ENCODE measurements at regions of chr7 and their contacts with region 1.

Region 1: DNA sequence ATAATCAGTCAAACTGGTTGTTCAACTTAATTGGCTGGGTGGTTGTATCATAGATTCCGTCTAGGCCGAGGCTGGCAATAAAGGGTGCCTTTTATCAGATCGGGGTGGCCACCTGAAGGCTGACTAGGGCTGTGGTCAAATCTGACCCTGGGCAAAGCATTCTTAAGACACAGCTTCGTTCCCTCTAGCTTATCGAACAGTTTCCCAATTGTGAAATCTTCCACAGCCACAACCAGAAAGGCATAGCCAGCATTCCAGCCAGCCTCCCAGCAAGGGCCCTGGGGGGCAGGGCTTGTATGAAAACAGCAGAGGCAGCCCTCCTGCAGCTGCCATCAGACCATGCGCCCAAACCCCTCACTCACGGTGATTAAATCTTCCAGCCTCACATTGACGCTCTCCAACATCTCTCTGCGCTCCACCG is 42.5 kb upstream of the TMEM213 start:
- DNase-seq: peak; percentile 84
- H3K4me3 Mint-ChIP-seq: peak overlapping the region; percentile 39
- H3K27ac Mint-ChIP-seq: peak overlapping the region; percentile 82
- H3K4me1 Mint-ChIP-seq: peaks cover 58% of the 10 kb centered on the region
- H3K27me3 Mint-ChIP-seq: no peaks in the 10 kb centered on the region
- CTCF ChIP-seq: no peak

Region 2: DNA sequence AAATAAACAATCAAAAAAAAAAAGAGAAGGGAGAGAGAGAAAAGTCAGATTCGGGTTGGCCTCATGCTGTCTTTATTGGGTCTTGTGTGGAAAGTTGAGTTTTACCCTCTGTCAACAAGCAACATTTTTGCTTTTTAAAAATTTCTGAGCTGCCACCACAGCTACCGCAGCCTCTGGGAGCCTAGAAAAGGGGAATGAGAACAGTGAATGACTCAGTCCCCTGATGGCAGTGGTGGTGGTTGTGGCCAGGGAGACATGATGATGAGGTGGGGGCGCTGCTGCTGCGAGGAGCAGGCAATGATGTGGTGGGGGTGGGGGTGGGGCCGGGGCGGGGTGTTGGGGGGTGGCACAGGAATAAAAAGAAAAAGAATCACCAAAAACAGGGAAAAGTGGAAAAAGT is 733.4 kb before region 1 on chr7:
- CTCF ChIA-PET with region 1: interaction called, 11 read pairs
- intact Hi-C with region 1: no loop called
- DNase-seq: no peak
- H3K4me3 Mint-ChIP-seq: no peak overlapping the region
- H3K27ac Mint-ChIP-seq: no peak overlapping the region
- H3K4me1 Mint-ChIP-seq: peaks cover 8% of the 10 kb centered on the region
- H3K27me3 Mint-ChIP-seq: no peaks in the 10 kb centered on the region
- CTCF ChIP-seq: no peak

Region 3: GRCh38 chr7:138691178-138691577 is 64.2 kb before region 1 on chr7:
- CTCF ChIA-PET with region 1: no interaction called
- intact Hi-C with region 1: no loop called
- DNase-seq: no peak
- H3K4me3 Mint-ChIP-seq: no peak overlapping the region
- H3K27ac Mint-ChIP-seq: no peak overlapping the region
- H3K4me1 Mint-ChIP-seq: no peaks in the 10 kb centered on the region
- H3K27me3 Mint-ChIP-seq: no peaks in the 10 kb centered on the region
- CTCF ChIP-seq: no peak

Region 4: DNA sequence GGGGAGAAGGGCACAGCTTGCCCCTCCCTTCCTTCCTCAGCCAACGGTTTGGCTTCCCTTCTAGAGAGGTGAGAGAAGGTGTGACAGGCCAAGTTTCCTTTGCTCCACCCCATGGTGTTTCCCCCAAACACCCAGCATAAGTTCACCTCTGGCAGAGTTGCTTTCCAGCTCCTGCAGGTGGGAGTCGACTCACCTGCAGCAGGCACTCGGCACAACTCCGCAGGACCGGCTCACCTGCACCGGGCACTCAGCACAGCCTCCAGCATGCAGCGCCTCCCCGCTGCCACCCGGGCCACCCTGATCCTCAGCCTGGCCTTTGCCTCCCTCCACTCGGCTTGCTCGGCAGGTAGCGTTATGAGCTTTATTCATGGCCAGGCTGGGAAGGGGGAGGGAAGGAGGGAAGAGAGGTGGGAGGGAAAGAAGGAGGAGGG is 42.5 kb after region 1 on chr7 and contains the starts of genes ATP6V0A4 and TMEM213:
- CTCF ChIA-PET with region 1: interaction called, 13 read pairs
- intact Hi-C with region 1: loop called (anchors 5 kb)
- DNase-seq: peak; percentile 72
- H3K4me3 Mint-ChIP-seq: peak within 1 kb of the TSS; percentile 65
- H3K27ac Mint-ChIP-seq: peak within 1 kb of the TSS; percentile 49
- H3K4me1 Mint-ChIP-seq: peaks cover 51% of the 10 kb centered on the region
- H3K27me3 Mint-ChIP-seq: no peaks in the 10 kb centered on the region
- CTCF ChIP-seq: no peak
- total RNA-seq, gene ATP6V0A4: 5.6 and 7.7 TPM in 2 replicates
- total RNA-seq, gene TMEM213: 9.8 and 11.3 TPM in 2 replicates

Region 5: GRCh38 chr7:138825049-138825721 is 69.8 kb after region 1 on chr7:
- CTCF ChIA-PET with region 1: interaction called, 7 read pairs
- intact Hi-C with region 1: loop called (anchors 5 kb)
- DNase-seq: no peak
- H3K4me3 Mint-ChIP-seq: no peak overlapping the region
- H3K27ac Mint-ChIP-seq: no peak overlapping the region
- H3K4me1 Mint-ChIP-seq: peaks cover 21% of the 10 kb centered on the region
- H3K27me3 Mint-ChIP-seq: no peaks in the 10 kb centered on the region
- CTCF ChIP-seq: no peak

Region 6: DNA sequence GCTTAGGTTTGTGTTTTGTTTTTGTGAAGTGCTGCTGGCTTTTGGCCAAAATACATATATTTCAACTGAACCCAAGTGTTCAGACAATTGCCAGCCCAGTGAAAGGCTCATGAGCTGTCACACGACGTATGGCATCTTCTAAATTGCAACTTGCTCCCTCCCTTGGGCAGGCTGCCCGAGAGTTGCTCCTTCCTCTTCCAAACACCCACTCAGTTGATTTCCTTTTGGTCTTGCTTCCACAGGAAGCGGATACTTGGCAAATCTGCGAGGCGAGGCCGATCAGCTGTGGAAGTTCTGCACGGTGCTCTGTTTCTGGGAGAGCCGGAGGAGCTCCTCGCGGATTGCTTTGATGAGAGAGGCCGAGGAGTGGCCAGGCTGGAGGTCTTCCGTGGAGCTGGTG is 82.3 kb after region 1 on chr7:
- CTCF ChIA-PET with region 1: no interaction called
- intact Hi-C with region 1: no loop called
- DNase-seq: no peak
- H3K4me3 Mint-ChIP-seq: no peak overlapping the region
- H3K27ac Mint-ChIP-seq: no peak overlapping the region
- H3K4me1 Mint-ChIP-seq: no peaks in the 10 kb centered on the region
- H3K27me3 Mint-ChIP-seq: no peaks in the 10 kb centered on the region
- CTCF ChIP-seq: no peak

Region 7: DNA sequence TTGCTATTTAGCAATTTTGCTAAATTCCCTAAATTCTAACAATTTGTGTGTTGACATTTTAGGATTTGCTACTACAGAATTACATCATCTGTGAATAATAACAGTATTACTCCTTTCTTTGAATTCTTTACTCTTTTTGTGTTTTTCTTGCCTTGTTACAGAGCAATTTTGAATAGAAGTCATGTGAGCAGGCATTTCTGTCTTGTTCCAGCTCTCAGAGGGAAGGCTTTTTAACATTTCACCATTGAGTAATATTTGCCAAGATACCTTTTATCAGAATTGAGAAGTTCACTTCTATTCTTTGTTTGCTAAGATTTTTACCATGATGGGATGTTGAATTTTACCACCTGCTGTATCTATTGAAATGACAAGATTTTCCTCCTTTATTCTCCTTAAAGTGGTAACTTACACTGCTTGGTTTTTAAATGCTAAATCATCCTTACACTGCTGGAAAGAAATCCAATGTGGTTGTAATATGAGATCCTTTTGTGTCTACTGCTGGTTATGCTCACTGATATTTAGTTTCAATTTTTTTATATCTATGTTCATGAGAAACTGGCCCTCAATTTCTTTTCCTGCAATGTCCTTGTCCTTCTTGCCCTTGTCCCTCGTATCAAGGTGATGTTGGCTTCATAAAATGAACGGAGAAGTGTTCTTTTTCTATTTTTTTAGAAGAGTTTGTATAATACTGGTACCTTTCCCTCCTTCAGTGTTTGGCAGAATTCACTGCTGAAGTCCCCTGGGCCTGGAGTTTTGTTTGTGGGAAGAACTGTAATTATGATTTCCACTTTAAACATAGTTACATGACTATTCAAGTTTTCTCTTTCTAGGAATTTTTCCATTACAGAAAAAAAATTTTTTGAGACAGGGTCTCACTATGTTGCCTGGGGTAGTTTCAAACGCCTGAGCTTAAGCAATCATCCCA is 93.0 kb after region 1 on chr7:
- CTCF ChIA-PET with region 1: no interaction called
- intact Hi-C with region 1: no loop called
- DNase-seq: no peak
- H3K4me3 Mint-ChIP-seq: no peak overlapping the region
- H3K27ac Mint-ChIP-seq: no peak overlapping the region
- H3K4me1 Mint-ChIP-seq: peaks cover 7% of the 10 kb centered on the region
- H3K27me3 Mint-ChIP-seq: no peaks in the 10 kb centered on the region
- CTCF ChIP-seq: no peak

Region 8: DNA sequence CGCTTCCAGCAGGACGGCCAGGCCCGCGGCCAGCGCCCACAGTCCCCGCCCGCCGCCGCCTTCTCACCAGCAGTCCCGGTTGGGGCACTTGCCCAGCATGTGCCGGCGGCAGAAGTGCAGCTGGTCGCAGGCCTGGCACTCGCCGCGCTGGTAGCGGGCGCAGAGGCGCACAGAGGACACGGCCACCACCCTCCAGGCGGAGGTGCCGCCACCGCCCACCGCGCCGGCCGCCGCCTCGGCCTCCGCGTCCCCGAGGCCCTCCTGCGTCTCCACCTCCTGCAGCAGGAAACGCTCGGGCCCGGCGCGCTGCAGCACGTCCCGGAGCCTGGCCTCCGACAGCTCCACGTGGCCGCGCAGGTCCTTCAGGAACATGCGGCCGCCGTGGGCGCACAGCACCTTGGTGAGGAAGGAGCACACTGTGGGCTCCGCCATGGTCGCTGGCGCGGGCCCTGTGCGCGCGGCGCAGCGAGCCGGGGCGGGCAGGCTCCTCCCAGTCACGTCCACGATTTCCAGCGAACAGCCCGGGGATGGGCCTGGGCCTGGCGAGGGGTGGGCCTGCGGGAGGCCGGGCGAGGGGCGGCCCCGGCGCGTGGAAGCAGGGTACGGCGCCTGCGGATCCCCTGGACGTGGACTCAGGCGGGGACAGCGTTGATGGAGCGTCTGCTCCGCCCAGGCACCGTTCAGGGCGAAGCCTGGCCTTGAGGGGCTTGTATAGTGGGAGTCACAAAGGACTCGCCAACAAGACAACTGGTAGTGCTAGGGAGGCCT is 280.4 kb after region 1 on chr7 and contains the start of gene ZC3HAV1L:
- CTCF ChIA-PET with region 1: no interaction called
- intact Hi-C with region 1: no loop called
- DNase-seq: peak; percentile 71
- H3K4me3 Mint-ChIP-seq: peak within 1 kb of the TSS; percentile 78
- H3K27ac Mint-ChIP-seq: no peak within 1 kb of the TSS
- H3K4me1 Mint-ChIP-seq: peaks cover 28% of the 10 kb centered on the region
- H3K27me3 Mint-ChIP-seq: no peaks in the 10 kb centered on the region
- CTCF ChIP-seq: no peak
- total RNA-seq, gene ZC3HAV1L: 13.7 and 15.0 TPM in 2 replicates

Measured in Calu3 (cell line).